ENCODE measurements at regions of chr6 and their contacts with region 1.

Region 1: GRCh38 chr6:139364302-139364981 is 10.0 kb downstream of the CITED2 start:
- DNase-seq: no peak
- ATAC-seq: peak; percentile 41 to 61
- H3K4me3 ChIP-seq: no peak overlapping the region
- H3K27ac ChIP-seq: no peak overlapping the region
- H3K4me1 ChIP-seq: peaks cover 15% of the 10 kb centered on the region
- H3K27me3 ChIP-seq: no peaks in the 10 kb centered on the region
- CTCF ChIP-seq: peak; percentile 75

Region 2: GRCh38 chr6:138817822-138818308 is 546.6 kb before region 1 on chr6:
- intact Hi-C with region 1: loop called (anchors 5 kb)
- DNase-seq: peak; percentile 79
- ATAC-seq: peak; percentile 92 to 95
- H3K4me3 ChIP-seq: no peak overlapping the region
- H3K27ac ChIP-seq: peak overlapping the region; percentile 61
- H3K4me1 ChIP-seq: no peaks in the 10 kb centered on the region
- H3K27me3 ChIP-seq: no peaks in the 10 kb centered on the region
- CTCF ChIP-seq: no peak

Region 3: DNA sequence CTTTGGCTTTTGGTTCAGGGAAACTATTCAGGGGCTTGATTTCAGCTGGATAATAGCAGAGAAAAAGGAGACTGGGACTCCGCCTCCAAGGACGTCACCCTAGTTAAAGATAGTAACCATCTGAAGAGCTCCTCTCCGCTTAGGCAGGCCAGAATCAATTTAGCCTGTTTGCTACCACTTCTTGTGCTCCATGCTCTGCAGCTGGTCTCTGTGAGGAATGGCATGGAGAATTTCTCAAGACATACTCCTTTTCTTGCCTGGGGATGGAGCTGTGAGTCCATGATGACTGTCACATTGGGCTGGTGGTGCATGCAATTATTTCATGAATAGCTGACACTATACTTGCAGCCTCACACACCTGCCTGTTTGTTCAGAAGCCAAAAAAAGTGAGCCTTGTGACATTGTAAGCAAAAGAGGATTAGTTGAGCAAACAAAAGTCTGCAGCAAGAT is 134.0 kb before region 1 on chr6:
- intact Hi-C with region 1: loop called (anchors 10 kb)
- DNase-seq: no peak
- ATAC-seq: peak in 1 of 2 donors; percentile 21
- H3K4me3 ChIP-seq: no peak overlapping the region
- H3K27ac ChIP-seq: no peak overlapping the region
- H3K4me1 ChIP-seq: no peaks in the 10 kb centered on the region
- H3K27me3 ChIP-seq: no peaks in the 10 kb centered on the region
- CTCF ChIP-seq: no peak

Measured in lower lobe of right lung (tissue), 2 donors.